Activated naive CD4-positive, alpha-beta T cell treated with anti-CD3 and anti-CD28 coated beads for 36 hours (primary cell): ENCODE measurements at regions of chr1 and their contacts with region 1.

Region 1: DNA sequence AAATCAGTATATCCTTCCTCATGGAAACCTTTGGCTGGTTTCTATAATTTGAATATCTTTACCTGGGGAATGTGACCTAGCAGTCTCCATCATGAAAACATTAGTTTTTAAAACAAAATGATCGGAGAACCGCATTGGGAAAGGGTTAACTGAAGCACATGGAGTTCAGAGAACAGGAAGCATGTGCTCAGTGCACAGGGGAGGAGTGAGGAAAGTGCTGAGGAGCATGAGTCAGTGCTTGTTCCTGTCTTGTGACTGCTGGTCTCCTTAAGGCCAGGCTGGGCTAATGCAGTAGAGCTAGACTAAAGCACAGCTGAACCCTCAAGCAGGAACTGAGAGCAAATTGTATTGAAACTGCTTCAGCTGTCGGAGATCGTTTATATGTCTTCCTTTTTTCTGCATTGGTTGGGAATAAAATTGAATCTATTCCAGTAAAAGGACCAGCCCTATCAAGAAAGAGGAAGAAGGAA is 5.8 kb downstream of the IFI16 start:
- DNase-seq: peak; percentile 84
- H3K4me3 Mint-ChIP-seq: peak overlapping the region; percentile 91
- H3K27ac Mint-ChIP-seq: peak overlapping the region; percentile 99
- H3K4me1 Mint-ChIP-seq: peaks cover 42% of the 10 kb centered on the region
- H3K27me3 Mint-ChIP-seq: no peaks in the 10 kb centered on the region

Region 2: DNA sequence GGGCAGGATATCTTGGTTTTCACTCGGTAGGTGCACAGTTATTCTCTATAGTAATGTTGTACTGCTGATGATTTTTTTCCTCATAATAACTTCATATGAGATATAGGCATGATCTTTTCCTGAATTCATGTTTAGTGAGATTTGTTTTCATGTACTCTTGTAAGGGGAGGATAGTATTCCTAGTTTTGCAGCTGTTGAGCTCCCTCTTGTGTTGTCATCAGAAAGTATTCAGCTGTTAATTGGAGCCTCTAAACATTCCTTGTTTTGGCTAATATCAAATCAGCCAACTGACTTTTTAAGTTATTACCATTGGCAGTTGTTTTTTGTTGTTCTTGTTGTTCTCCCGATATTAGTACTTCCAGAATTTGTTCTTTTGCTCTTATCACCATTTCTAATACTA is 519.1 kb before region 1 on chr1:
- CTCF ChIA-PET with region 1: no interaction called
- intact Hi-C with region 1: no loop called
- DNase-seq: no peak
- H3K4me3 Mint-ChIP-seq: no peak overlapping the region
- H3K27ac Mint-ChIP-seq: no peak overlapping the region
- H3K4me1 Mint-ChIP-seq: no peaks in the 10 kb centered on the region
- H3K27me3 Mint-ChIP-seq: peaks cover 11% of the 10 kb centered on the region

Region 3: DNA sequence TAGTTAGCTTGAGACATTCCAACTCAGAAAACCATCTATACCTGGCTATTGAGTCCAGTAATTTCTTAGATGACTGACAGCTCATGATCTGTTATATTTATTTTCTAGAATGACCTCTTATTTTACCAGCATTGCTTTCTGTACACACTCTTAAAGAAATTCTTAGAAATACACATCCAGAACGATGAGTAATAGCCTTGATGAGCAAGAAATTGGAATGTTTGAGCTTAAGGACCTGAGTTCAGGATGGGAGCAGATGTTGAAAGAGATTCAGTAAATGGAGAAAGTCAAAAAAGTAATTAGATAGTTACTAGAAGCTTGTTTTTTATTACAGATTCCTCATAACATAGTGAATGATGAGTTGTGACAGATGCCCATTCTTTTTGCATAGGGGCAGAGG is 72.4 kb before region 1 on chr1:
- CTCF ChIA-PET with region 1: no interaction called
- intact Hi-C with region 1: no loop called
- DNase-seq: no peak
- H3K4me3 Mint-ChIP-seq: no peak overlapping the region
- H3K27ac Mint-ChIP-seq: no peak overlapping the region
- H3K4me1 Mint-ChIP-seq: peaks cover 11% of the 10 kb centered on the region
- H3K27me3 Mint-ChIP-seq: no peaks in the 10 kb centered on the region

Region 4: DNA sequence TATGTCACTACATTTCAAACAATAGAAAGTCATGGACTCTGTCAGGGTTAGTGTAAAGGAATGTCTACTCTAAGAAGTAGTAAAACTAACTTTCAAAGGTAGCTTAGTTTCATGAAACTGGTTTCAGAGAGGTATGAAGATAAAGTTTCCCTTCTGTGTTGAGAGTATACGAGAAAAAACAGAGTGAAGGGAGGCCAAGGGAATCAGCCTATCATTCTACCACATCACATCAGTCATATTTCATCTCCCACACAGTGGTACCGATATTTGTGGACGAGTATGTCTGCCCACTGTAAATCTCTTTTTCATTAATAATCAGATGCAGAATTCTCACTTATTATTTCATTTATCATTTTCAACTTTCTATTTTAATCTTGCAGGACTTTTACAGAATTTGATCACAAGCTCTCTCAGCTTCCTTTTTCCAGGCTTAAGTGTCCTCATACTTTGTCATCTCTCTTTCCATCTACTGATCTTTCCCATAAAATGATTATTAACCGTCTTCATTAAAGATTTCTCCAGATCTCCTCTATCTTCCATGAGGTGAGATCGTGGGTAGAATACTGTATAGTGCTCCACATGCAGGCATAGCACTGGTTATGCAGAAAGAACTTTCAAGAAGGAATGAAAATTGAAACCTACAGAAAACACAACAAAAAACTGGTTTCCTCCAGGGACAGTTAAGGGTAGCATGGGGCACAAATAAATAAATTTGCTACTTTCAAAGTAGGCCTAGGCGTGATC is 17.3 kb before region 1 on chr1:
- CTCF ChIA-PET with region 1: no interaction called
- intact Hi-C with region 1: no loop called
- DNase-seq: no peak
- H3K4me3 Mint-ChIP-seq: no peak overlapping the region
- H3K27ac Mint-ChIP-seq: peak overlapping the region; percentile 30
- H3K4me1 Mint-ChIP-seq: peaks cover 34% of the 10 kb centered on the region
- H3K27me3 Mint-ChIP-seq: no peaks in the 10 kb centered on the region

Region 5: DNA sequence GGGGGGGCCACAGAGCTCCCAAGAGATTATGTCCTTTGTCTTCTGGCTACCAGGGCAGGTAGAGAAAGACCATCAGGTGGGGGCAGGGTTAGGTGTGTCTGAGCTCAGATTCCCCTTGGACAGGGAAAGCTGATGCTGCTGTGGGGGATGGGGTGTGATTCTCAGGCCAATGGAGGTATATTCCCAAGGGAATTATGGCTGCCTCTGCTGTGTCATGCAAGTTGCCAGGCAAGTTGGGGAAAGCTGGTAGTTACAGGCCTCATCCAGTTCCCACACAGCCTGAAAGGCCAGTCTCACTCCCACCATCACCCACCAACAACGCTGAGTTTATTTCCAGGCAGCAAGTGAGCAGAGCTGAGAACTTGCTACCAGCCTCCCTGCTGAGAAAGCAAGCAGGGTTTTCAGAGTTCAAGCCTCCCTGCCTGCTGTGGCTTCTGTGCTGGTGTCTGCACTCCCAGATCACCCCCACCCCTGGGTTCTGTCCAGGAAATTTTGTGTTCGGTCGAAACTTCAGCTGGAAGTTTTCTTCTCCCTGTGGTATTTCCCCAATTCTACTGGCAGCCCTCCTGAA is 15.5 kb after region 1 on chr1:
- CTCF ChIA-PET with region 1: interaction called, 3 read pairs
- intact Hi-C with region 1: loop called (anchors 1 kb)
- DNase-seq: no peak
- H3K4me3 Mint-ChIP-seq: no peak overlapping the region
- H3K27ac Mint-ChIP-seq: no peak overlapping the region
- H3K4me1 Mint-ChIP-seq: peaks cover 48% of the 10 kb centered on the region
- H3K27me3 Mint-ChIP-seq: no peaks in the 10 kb centered on the region

Region 6: GRCh38 chr1:159040206-159040605 is 24.7 kb after region 1 on chr1:
- CTCF ChIA-PET with region 1: no interaction called
- intact Hi-C with region 1: loop called (anchors 1 kb)
- DNase-seq: no peak
- H3K4me3 Mint-ChIP-seq: no peak overlapping the region
- H3K27ac Mint-ChIP-seq: no peak overlapping the region
- H3K4me1 Mint-ChIP-seq: peaks cover 53% of the 10 kb centered on the region
- H3K27me3 Mint-ChIP-seq: no peaks in the 10 kb centered on the region

Region 7: GRCh38 chr1:159089184-159089791 is 73.8 kb after region 1 on chr1:
- CTCF ChIA-PET with region 1: interaction called, 3 read pairs
- intact Hi-C with region 1: loop called (anchors 2 kb)
- DNase-seq: peak; percentile 44
- H3K4me3 Mint-ChIP-seq: no peak overlapping the region
- H3K27ac Mint-ChIP-seq: peak overlapping the region; percentile 47
- H3K4me1 Mint-ChIP-seq: peaks cover 49% of the 10 kb centered on the region
- H3K27me3 Mint-ChIP-seq: no peaks in the 10 kb centered on the region